MCF 10A (cell line): ENCODE measurements at regions of chr11 and their contacts with region 1.

Region 1: DNA sequence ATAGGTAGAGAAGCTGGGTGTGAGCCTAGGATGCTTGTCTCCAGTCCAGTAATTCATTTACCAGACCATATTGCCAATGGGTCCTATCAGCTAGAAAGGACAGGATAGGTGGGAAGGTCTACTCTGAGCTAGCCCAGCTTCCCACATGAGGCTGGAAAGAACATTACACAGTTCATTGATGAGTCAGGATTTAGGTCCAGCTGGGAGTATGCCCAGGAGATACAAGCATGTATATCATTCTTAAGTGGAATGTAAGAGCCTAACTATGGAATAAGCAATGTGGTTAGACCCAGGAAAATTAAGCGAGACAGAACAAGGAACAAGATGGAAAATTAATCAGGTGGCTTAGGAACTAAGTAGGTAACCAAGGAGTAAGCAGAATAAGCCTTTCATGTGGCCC is 59.0 kb upstream of the TBCEL start:
- DNase-seq: no peak
- H3K4me3 Mint-ChIP-seq: no peak overlapping the region
- H3K27ac Mint-ChIP-seq: no peak overlapping the region
- H3K4me1 Mint-ChIP-seq: no peaks in the 10 kb centered on the region
- H3K27me3 Mint-ChIP-seq: peaks cover 91% of the 10 kb centered on the region
- CTCF ChIP-seq: no peak

Region 2: GRCh38 chr11:120952461-120953434 is 12.1 kb before region 1 on chr11:
- CTCF ChIA-PET with region 1: interaction called, 13 read pairs
- POLR2A ChIA-PET with region 1: no interaction called
- intact Hi-C with region 1: no loop called
- DNase-seq: peak; percentile 81
- H3K4me3 Mint-ChIP-seq: peak overlapping the region; percentile 49
- H3K27ac Mint-ChIP-seq: no peak overlapping the region
- H3K4me1 Mint-ChIP-seq: peaks cover 6% of the 10 kb centered on the region
- H3K27me3 Mint-ChIP-seq: peaks cover 54% of the 10 kb centered on the region
- CTCF ChIP-seq: peak; percentile 76